ENCODE measurements at regions of chr1 and their contacts with region 1.

Region 1: GRCh38 chr1:33086384-33086850 is 5.5 kb downstream of the AZIN2 start:
- DNase-seq: peak in 11 of 14 experiments; percentile 22 to 68 (median 30)
- ATAC-seq: no peak
- H3K4me3 ChIP-seq: no peak overlapping the region
- H3K4me3 Mint-ChIP-seq: no peak overlapping the region
- H3K27ac ChIP-seq: no peak overlapping the region
- H3K27ac Mint-ChIP-seq: no peak overlapping the region
- H3K4me1 ChIP-seq: peaks cover 31% of the 10 kb centered on the region
- H3K4me1 Mint-ChIP-seq: peaks cover 43% of the 10 kb centered on the region
- H3K27me3 ChIP-seq: no peaks in the 10 kb centered on the region
- H3K27me3 Mint-ChIP-seq: no peaks in the 10 kb centered on the region
- CTCF ChIP-seq: no peak

Region 2: DNA sequence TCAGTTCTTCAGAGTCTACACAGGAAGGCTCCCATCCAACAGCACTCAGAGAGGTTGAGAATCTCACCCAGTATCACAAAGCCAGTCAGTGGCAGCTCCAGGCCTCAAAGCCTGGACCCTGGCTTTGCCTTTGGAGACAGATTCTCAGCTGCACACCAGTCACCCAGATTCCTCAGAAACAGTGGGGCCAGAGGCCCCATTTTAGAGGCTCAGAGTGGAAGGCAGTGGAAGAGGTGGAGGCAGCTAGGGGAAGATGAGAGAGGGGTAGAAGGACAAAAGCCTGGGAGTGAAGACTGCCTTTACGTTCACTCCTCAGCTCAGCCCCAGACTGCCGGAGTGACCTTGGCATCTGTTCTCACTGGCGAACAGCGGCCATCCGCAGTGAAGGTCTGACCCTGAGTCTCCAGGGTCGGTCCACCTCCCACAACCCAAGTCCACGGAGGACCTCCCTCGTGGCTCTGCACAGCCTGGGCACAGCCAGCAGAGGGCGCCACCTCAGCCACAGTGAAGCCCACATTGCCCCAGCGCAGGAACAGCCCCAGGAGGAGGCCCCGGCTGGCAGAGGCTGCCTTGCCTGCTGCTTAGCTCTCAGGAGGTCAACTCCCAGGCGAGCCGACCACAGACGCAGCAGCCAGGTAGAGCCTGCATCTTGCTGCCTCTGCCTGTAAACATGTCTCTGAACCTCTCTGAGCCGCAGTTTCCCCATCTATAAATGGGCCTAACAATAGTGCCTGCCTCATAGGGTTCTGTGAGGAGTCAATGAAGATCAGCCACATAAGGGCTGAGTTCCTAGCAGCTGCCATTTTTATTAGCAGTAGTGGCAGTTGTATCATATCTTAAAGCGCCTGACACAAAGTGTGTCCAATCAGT is 209.8 kb before region 1 on chr1:
- CTCF ChIA-PET with region 1: interaction called, 3 read pairs
- POLR2A ChIA-PET with region 1: no interaction called
- intact Hi-C with region 1: loop called (anchors 1 to 5 kb)
- DNase-seq: peak in 13 of 14 experiments; percentile 30 to 77 (median 46)
- ATAC-seq: peak; percentile 85
- H3K4me3 ChIP-seq: no peak overlapping the region
- H3K4me3 Mint-ChIP-seq: no peak overlapping the region
- H3K27ac ChIP-seq: no peak overlapping the region
- H3K27ac Mint-ChIP-seq: no peak overlapping the region
- H3K4me1 ChIP-seq: peaks cover 15% of the 10 kb centered on the region
- H3K4me1 Mint-ChIP-seq: peaks cover 1% of the 10 kb centered on the region
- H3K27me3 ChIP-seq: peaks cover 17 to 25% of the 10 kb centered on the region in 2 experiments
- H3K27me3 Mint-ChIP-seq: peaks cover 66% of the 10 kb centered on the region
- CTCF ChIP-seq: peak; percentile 76

Region 3: GRCh38 chr1:34342334-34342733 is 1255.9 kb after region 1 on chr1:
- CTCF ChIA-PET with region 1: no interaction called
- POLR2A ChIA-PET with region 1: no interaction called
- intact Hi-C with region 1: no loop called
- DNase-seq: no peak
- ATAC-seq: no peak
- H3K4me3 ChIP-seq: no peak overlapping the region
- H3K4me3 Mint-ChIP-seq: no peak overlapping the region
- H3K27ac ChIP-seq: no peak overlapping the region
- H3K27ac Mint-ChIP-seq: no peak overlapping the region
- H3K4me1 ChIP-seq: no peaks in the 10 kb centered on the region
- H3K4me1 Mint-ChIP-seq: no peaks in the 10 kb centered on the region
- H3K27me3 ChIP-seq: peaks cover 0 to 6% of the 10 kb centered on the region in 2 experiments
- H3K27me3 Mint-ChIP-seq: peaks cover 40% of the 10 kb centered on the region
- CTCF ChIP-seq: no peak

Measured in CD4-positive, alpha-beta T cell (primary cell).